ENCODE measurements at regions of chr4 and their contacts with region 1.

Region 1: DNA sequence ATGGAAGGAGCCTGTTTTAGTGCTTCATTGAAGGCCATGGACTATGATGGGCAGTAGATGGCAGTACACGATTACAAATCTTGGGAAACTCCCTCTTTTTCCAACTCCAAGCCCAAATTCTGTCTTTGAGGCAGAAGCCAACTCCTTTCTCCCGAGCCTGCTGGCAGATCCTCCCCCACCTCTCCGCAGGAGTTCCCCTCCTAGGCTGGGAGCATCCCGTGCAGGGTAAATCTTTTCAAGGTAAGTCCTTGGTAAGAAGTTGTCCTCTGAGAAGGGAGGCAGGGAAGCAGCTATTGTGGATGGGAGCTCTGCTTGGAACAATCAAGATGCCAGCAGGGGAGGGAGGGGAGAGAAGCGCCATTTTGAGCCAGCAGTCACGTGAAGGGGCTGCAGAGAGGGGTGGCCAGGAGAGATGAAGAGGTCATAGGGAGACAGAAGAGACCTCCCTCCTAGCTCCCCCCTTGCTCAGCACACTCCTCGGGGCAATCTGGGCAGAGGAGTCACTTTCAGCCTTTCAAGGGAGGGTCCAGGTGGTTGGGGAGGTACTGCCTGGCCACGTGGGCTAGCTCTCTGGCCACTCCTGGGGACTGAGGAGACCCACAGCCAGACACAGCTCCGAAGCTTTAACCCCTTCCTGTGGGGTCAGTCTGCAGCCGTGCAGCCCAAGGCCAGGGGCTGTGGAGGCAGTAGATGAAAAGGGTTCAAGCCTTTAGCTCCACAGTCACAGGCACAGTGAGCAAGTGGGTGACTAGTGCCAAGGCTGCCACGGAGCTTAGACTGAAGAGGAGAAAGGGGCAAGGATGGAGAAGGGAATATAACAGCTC is 9.6 kb downstream of the CC2D2A start:
- DNase-seq: peak in 3 of 14 experiments; percentile 17 to 41 (median 33)
- ATAC-seq: no peak
- H3K4me3 ChIP-seq: no peak overlapping the region
- H3K4me3 Mint-ChIP-seq: no peak overlapping the region
- H3K27ac ChIP-seq: no peak overlapping the region
- H3K27ac Mint-ChIP-seq: no peak overlapping the region
- H3K4me1 ChIP-seq: no peaks in the 10 kb centered on the region
- H3K4me1 Mint-ChIP-seq: no peaks in the 10 kb centered on the region
- H3K27me3 ChIP-seq: no peaks in the 10 kb centered on the region
- H3K27me3 Mint-ChIP-seq: no peaks in the 10 kb centered on the region
- CTCF ChIP-seq: no peak

Region 2: GRCh38 chr4:15510961-15511360 is 31.7 kb after region 1 on chr4:
- CTCF ChIA-PET with region 1: no interaction called
- POLR2A ChIA-PET with region 1: no interaction called
- intact Hi-C with region 1: loop called in 1 of 2 experiments (anchors 1 kb)
- DNase-seq: no peak
- ATAC-seq: no peak
- H3K4me3 ChIP-seq: no peak overlapping the region
- H3K4me3 Mint-ChIP-seq: no peak overlapping the region
- H3K27ac ChIP-seq: no peak overlapping the region
- H3K27ac Mint-ChIP-seq: no peak overlapping the region
- H3K4me1 ChIP-seq: no peaks in the 10 kb centered on the region
- H3K4me1 Mint-ChIP-seq: no peaks in the 10 kb centered on the region
- H3K27me3 ChIP-seq: no peaks in the 10 kb centered on the region
- H3K27me3 Mint-ChIP-seq: no peaks in the 10 kb centered on the region
- CTCF ChIP-seq: no peak